ENCODE measurements at regions of chr21 and their contacts with region 1.

Region 1: DNA sequence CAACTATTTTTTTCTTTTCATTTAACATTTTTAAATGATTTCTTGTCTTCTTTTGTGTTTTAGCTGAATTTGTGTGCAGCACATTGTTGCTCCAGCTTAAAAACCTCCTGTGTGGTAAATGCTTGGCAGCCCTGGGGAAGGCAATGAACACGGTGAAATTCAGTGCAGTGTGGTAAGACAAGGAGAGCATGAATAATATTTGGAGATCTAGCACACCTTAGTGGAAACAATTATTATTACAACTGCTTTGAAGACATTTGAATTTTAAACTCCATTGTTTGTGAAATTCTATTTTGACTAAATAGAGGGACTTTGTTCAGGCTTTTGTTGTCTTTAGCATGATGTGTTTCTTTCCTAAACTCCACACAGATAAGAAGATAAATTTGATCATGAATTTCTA is 242.6 kb upstream of the CXADR start:
- DNase-seq: peak; percentile 52
- H3K4me3 Mint-ChIP-seq: no peak overlapping the region
- H3K27ac Mint-ChIP-seq: no peak overlapping the region
- H3K4me1 Mint-ChIP-seq: no peaks in the 10 kb centered on the region
- H3K27me3 Mint-ChIP-seq: no peaks in the 10 kb centered on the region
- CTCF ChIP-seq: peak; percentile 70

Region 2: DNA sequence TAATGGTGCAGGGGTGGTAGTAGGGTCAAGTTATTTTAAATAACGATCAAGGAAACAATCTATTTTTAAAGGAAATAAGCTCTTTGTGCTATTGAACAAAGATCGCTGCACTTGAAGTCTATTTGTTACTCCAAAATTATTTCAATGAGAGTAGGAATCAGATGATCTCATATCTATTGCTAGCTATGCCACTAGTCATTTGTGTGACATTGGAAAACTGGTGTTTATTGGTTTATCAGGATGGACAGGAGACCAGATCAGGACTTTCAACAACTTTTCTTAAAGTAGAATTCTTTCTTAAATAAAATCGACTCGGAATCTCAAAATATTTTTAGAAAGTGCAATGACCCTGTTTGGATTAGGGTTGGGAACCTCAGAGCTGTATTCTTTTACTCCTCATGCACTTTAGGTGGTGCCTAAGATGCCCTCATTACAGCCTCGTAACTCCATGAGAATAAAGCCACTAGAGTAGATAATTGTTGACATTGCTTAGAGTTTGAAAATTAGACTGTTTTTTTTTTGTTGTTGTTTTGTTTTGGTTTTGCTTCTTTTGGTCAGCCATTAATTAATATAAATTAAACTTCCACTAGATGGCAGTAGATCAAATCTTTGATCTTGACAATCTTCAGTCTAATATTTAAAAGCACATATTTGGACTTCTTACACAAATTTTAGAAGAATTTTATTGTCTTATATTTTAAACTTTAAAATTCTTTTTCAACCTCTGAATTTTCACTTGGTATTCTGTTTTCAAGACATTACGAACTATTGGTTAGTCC is 1188.0 kb before region 1 on chr21:
- CTCF ChIA-PET with region 1: interaction called, 3 read pairs
- POLR2A ChIA-PET with region 1: no interaction called
- intact Hi-C with region 1: loop called (anchors 10 kb)
- DNase-seq: peak; percentile 17
- H3K4me3 Mint-ChIP-seq: no peak overlapping the region
- H3K27ac Mint-ChIP-seq: no peak overlapping the region
- H3K4me1 Mint-ChIP-seq: peaks cover 7% of the 10 kb centered on the region
- H3K27me3 Mint-ChIP-seq: peaks cover 11% of the 10 kb centered on the region
- CTCF ChIP-seq: peak; percentile 29

Region 3: DNA sequence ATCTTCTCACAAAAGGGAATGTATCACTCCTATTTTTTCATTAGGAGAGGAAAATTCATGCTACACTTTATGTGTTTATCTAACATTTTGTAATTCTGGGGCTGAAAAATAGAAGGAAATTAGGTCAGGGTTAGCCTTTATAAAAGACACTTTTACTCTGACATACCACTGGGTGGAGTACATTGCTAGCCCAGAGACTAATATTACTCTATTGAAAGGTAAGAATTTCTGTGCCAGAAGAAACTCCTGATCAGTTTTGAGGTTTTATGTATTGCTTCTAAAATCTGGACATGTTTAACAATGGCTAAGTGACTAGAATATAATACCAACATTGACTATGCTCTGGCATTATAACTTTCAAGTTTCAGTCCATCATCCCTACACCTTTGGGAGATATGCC is 815.8 kb before region 1 on chr21:
- CTCF ChIA-PET with region 1: no interaction called
- POLR2A ChIA-PET with region 1: no interaction called
- intact Hi-C with region 1: loop called (anchors 10 kb)
- DNase-seq: peak; percentile 9
- H3K4me3 Mint-ChIP-seq: no peak overlapping the region
- H3K27ac Mint-ChIP-seq: no peak overlapping the region
- H3K4me1 Mint-ChIP-seq: no peaks in the 10 kb centered on the region
- H3K27me3 Mint-ChIP-seq: no peaks in the 10 kb centered on the region
- CTCF ChIP-seq: peak; percentile 26

Region 4: GRCh38 chr21:16942703-16943102 is 327.5 kb before region 1 on chr21:
- CTCF ChIA-PET with region 1: interaction called, 17 read pairs
- POLR2A ChIA-PET with region 1: no interaction called
- intact Hi-C with region 1: loop called (anchors 1 kb)
- DNase-seq: peak; percentile 54
- H3K4me3 Mint-ChIP-seq: no peak overlapping the region
- H3K27ac Mint-ChIP-seq: no peak overlapping the region
- H3K4me1 Mint-ChIP-seq: no peaks in the 10 kb centered on the region
- H3K27me3 Mint-ChIP-seq: no peaks in the 10 kb centered on the region
- CTCF ChIP-seq: peak; percentile 56

Measured in MCF 10A (cell line).